Activated CD4-positive, alpha-beta T cell treated with anti-CD3 and anti-CD28 coated beads, Interleukin-2, amount 10 ng/mL, durations not matched to agents 7 days and 5 days (primary cell): ENCODE measurements at regions of chr1 and their contacts with region 1.

Region 1: DNA sequence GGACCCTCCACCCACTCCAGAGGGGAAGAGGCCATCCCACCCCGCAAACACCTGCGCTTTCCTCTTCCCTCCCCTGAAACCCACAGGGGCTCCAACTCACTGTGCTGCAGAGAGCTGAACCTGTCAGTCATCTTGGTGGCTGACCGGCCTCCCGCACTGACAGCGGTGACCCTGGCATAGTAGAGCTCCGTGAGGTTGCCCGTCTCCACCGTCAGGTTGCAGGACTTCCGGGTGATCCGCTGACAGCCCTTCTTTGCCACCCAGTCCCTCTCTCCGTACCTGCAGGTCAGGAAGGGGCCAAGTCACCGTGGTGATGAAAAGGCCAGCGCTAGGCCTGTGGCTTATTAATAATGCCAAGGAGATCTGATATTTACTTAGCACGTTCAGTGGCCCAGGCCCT is 5.9 kb downstream of the IL22RA1 start:
- DNase-seq: no peak
- H3K4me3 Mint-ChIP-seq: no peak overlapping the region
- H3K27ac Mint-ChIP-seq: no peak overlapping the region
- H3K4me1 Mint-ChIP-seq: peaks cover 6% of the 10 kb centered on the region
- H3K27me3 Mint-ChIP-seq: peaks cover 11% of the 10 kb centered on the region

Region 2: DNA sequence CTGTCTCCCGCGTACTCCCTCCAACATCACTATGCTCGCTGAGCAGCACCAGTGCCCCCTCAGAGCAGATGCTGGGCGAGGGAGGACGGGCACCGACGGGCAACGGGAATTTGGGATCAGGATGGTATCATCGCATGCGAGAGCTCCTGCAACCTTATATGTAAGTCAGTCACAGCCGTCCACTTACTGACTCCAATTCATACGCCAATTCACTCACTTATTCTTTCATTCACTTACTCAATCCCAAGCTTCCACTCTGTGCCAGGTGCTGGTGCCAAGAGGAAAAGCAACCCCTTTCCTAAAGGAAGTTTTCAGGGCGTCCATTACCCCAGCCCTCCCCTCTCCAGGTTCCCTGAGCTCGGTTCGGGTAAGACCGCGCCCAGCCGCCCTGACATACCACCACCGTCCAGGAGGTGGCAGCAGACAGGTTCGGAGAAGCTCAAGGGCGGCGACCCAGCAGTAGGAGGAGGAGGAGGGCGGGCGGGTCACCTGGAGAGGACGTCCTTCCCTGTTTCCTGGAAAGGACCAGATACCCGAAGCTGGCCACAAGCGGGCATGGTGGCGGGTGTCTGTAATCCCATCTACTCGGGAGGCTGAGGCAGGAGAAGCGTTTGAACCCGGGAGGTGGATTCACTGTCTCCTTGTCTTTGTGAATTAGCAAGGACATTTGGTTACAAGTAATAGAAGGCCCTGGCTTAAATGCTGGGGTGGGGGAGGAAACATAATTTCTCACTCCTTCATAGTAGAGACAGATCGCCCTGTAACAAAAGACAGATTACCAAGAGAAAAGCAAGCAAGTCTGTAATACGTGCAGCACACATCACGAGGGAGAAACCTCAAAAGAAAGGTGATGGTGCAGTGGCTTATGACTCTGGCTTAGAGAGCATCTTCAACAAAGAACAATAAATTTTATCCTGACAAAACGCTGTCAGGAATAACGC is 13.5 kb after region 1 on chr1:
- CTCF ChIA-PET with region 1: interaction called, 29 read pairs
- POLR2A ChIA-PET with region 1: no interaction called
- DNase-seq: peak; percentile 91
- H3K4me3 Mint-ChIP-seq: peak overlapping the region; percentile 33
- H3K27ac Mint-ChIP-seq: peak overlapping the region; percentile 6
- H3K4me1 Mint-ChIP-seq: peaks cover 20% of the 10 kb centered on the region
- H3K27me3 Mint-ChIP-seq: peaks cover 24% of the 10 kb centered on the region